Naive thymus-derived CD4-positive, alpha-beta T cell (primary cell): ENCODE measurements at regions of chr4 and their contacts with region 1.

Region 1: GRCh38 chr4:86934771-86935565 is at the start of gene AFF1:
- DNase-seq: peak; percentile 74 to 91 (median 81)
- ATAC-seq: peak; percentile 90
- H3K4me3 ChIP-seq: peak within 1 kb of the TSS; percentile 91
- H3K4me3 Mint-ChIP-seq: peak within 1 kb of the TSS; percentile 92 to 97 (median 94)
- H3K27ac ChIP-seq: peak within 1 kb of the TSS; percentile 90
- H3K27ac Mint-ChIP-seq: peak within 1 kb of the TSS; percentile 91 to 97 (median 96)
- H3K4me1 ChIP-seq: peaks cover 29% of the 10 kb centered on the region in 2 donors
- H3K4me1 Mint-ChIP-seq: peaks cover 37 to 61% (median 53%) of the 10 kb centered on the region in 7 donors
- H3K27me3 ChIP-seq: no peaks in the 10 kb centered on the region
- H3K27me3 Mint-ChIP-seq: no peaks in the 10 kb centered on the region
- total RNA-seq, gene AFF1: 65.8 to 88.6 (median 78.7) TPM

Region 2: DNA sequence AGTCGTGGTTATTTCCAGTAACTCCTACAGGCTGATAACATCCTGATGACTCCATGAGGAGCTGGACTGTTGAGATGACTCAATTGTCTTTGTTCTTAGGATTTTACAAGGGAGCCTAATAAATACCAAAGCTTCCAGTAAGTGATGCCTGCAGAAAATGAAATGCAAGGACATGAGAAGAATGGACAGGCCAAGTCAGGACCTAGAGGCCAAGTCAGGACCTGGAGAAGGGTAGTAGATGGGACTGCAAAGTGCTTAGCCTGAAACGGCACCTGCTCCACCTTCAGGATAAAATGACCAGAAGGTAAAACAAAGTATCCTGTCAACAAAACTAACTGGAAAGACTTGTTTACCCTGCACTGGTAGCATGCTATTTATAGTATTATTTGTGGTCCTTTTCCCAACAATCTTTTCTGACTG is 79.4 kb before region 1 on chr4:
- CTCF ChIA-PET with region 1: no interaction called
- POLR2A ChIA-PET with region 1: no interaction called
- intact Hi-C with region 1: no loop called
- DNase-seq: no peak
- ATAC-seq: no peak
- H3K4me3 ChIP-seq: no peak overlapping the region
- H3K4me3 Mint-ChIP-seq: no peak overlapping the region
- H3K27ac ChIP-seq: no peak overlapping the region
- H3K27ac Mint-ChIP-seq: no peak overlapping the region
- H3K4me1 ChIP-seq: no peaks in the 10 kb centered on the region
- H3K4me1 Mint-ChIP-seq: peaks cover 0 to 2% (median 0%) of the 10 kb centered on the region in 7 donors
- H3K27me3 ChIP-seq: no peaks in the 10 kb centered on the region
- H3K27me3 Mint-ChIP-seq: peaks cover 0 to 4% (median 0%) of the 10 kb centered on the region in 5 donors

Region 3: GRCh38 chr4:86948276-86948675 is 13.3 kb after region 1 on chr4:
- CTCF ChIA-PET with region 1: no interaction called
- POLR2A ChIA-PET with region 1: no interaction called
- intact Hi-C with region 1: loop called (anchors 1 kb)
- DNase-seq: no peak
- ATAC-seq: no peak
- H3K4me3 ChIP-seq: no peak overlapping the region
- H3K4me3 Mint-ChIP-seq: no peak overlapping the region
- H3K27ac ChIP-seq: no peak overlapping the region
- H3K27ac Mint-ChIP-seq: peak overlapping the region in 1 of 9 donors; percentile 71
- H3K4me1 ChIP-seq: peaks cover 5 to 7% of the 10 kb centered on the region in 2 donors
- H3K4me1 Mint-ChIP-seq: peaks cover 21 to 54% (median 37%) of the 10 kb centered on the region in 7 donors
- H3K27me3 ChIP-seq: no peaks in the 10 kb centered on the region
- H3K27me3 Mint-ChIP-seq: no peaks in the 10 kb centered on the region

Region 4: GRCh38 chr4:87073199-87074120 is 138.5 kb after region 1 on chr4:
- CTCF ChIA-PET with region 1: no interaction called
- POLR2A ChIA-PET with region 1: no interaction called
- intact Hi-C with region 1: loop called (anchors 1 kb)
- DNase-seq: peak in 7 of 9 donors; percentile 20 to 59 (median 54)
- ATAC-seq: peak; percentile 91
- H3K4me3 ChIP-seq: peak overlapping the region; percentile 5
- H3K4me3 Mint-ChIP-seq: peak overlapping the region; percentile 75 to 87 (median 83)
- H3K27ac ChIP-seq: peak overlapping the region; percentile 6
- H3K27ac Mint-ChIP-seq: peak overlapping the region; percentile 41 to 93 (median 73)
- H3K4me1 ChIP-seq: peaks cover 6 to 9% of the 10 kb centered on the region in 2 donors
- H3K4me1 Mint-ChIP-seq: peaks cover 35 to 72% (median 66%) of the 10 kb centered on the region in 7 donors
- H3K27me3 ChIP-seq: no peaks in the 10 kb centered on the region
- H3K27me3 Mint-ChIP-seq: no peaks in the 10 kb centered on the region

Region 5: GRCh38 chr4:87220094-87220822 is 285.3 kb after region 1 on chr4 and contains the start of gene KLHL8:
- CTCF ChIA-PET with region 1: interaction called, 3 read pairs
- POLR2A ChIA-PET with region 1: interaction called, 11 read pairs
- intact Hi-C with region 1: loop called (anchors 1 kb)
- DNase-seq: peak; percentile 82 to 94 (median 89)
- ATAC-seq: peak; percentile 97
- H3K4me3 ChIP-seq: peak within 1 kb of the TSS; percentile 97
- H3K4me3 Mint-ChIP-seq: peak within 1 kb of the TSS; percentile 73 to 99 (median 94)
- H3K27ac ChIP-seq: peak within 1 kb of the TSS; percentile 92
- H3K27ac Mint-ChIP-seq: peak within 1 kb of the TSS; percentile 71 to 95 (median 91)
- H3K4me1 ChIP-seq: peaks cover 0 to 8% of the 10 kb centered on the region in 2 donors
- H3K4me1 Mint-ChIP-seq: peaks cover 6 to 32% (median 17%) of the 10 kb centered on the region in 7 donors
- H3K27me3 ChIP-seq: no peaks in the 10 kb centered on the region
- H3K27me3 Mint-ChIP-seq: peaks cover 0 to 14% (median 0%) of the 10 kb centered on the region in 5 donors
- total RNA-seq, gene KLHL8: 10.9 to 15.7 (median 11.6) TPM

Region 6: DNA sequence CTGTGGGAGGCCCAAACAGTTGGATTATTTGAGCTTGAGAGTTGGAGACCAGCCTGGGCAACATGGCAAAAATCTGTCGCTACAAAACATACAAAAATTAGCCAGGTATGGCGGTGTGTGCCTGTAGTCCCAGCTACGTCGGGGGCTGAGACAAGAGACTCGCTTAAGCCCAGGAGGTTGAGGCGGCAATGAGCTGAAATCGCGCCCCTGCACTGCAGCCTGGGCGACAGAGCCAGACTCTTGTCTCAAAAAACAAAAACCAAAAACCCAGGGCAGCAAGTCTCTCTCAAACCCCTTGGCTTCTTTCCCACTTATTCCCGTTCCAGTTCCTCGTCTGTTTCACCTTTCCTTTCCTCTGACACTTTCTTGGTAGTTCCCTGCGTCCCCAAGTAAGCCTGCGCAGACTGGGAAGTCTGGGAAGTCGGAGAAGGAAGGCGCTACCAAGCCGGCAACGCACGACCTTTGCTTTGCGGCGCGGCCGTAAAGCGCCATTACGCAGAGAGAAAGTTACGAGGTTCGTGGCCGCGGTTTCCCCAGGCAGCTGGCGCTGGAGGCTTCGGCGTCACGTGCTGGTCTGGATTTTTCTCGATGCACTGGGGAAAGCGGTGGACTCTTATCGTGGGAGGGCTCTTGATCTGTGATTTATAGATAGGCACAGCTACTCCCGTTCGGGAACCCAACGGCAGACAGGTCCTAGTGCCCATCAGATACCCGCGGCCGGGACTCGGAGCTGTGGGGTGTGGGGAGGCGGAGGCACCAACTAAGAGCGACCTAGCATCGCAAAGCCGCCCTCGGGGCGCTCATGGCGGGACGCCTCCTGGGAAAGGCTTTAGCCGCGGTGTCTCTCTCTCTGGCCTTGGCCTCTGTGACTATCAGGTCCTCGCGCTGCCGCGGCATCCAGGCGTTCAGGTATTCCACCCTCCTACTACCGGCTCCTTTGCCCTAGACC is 487.4 kb after region 1 on chr4 and contains the start of gene NUDT9:
- CTCF ChIA-PET with region 1: no interaction called
- POLR2A ChIA-PET with region 1: interaction called, 3 read pairs
- intact Hi-C with region 1: loop called (anchors 1 kb)
- DNase-seq: peak; percentile 74 to 92 (median 89)
- ATAC-seq: peak; percentile 92
- H3K4me3 ChIP-seq: peak within 1 kb of the TSS; percentile 96
- H3K4me3 Mint-ChIP-seq: peak within 1 kb of the TSS; percentile 94 to 100 (median 98)
- H3K27ac ChIP-seq: peak within 1 kb of the TSS; percentile 85
- H3K27ac Mint-ChIP-seq: peak within 1 kb of the TSS; percentile 97 to 100 (median 99)
- H3K4me1 ChIP-seq: peaks cover 17% of the 10 kb centered on the region in 2 donors
- H3K4me1 Mint-ChIP-seq: peaks cover 14 to 59% (median 48%) of the 10 kb centered on the region in 7 donors
- H3K27me3 ChIP-seq: no peaks in the 10 kb centered on the region
- H3K27me3 Mint-ChIP-seq: no peaks in the 10 kb centered on the region
- total RNA-seq, gene NUDT9: 9.7 to 18.1 (median 10.5) TPM